Endothelial cell of umbilical vein (primary cell): ENCODE measurements at regions of chr11 and their contacts with region 1.

Region 1: DNA sequence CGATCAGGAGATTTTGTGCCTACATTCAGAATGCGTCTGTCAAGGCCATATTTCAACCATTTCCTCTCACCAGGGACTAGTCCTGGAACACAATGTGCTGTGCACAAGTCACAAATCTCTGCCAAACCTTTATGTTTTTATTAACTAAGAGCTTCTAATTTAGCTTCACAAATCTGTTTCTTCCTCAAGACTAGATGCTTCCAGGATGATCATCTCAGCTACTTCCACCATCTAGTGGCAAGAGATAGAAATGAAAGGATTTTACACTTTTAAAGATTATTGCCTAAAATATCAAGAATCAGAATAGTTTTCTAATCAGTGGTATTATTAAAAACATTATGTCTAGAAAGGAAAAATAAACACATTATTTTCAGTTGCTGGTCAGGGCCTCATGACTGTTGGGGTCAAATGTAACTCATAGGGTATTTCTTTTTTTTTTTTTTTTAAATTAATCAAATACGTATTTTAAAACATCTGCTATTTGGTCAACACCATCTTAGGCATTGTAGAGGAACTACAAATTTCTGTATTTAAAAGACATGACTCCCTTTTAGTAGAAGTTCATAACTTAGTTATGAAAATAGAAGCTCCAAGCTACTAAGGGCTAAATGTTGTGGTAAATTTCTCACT is 1102.6 kb downstream of the DLG2 start:
- DNase-seq: no peak
- H3K4me3 ChIP-seq: no peak overlapping the region
- H3K27ac ChIP-seq: no peak overlapping the region
- H3K4me1 ChIP-seq: no peaks in the 10 kb centered on the region
- H3K27me3 ChIP-seq: no peaks in the 10 kb centered on the region
- CTCF ChIP-seq: peak in 1 of 2 donors; percentile 6
- POLR2A ChIP-seq: no peak

Region 2: DNA sequence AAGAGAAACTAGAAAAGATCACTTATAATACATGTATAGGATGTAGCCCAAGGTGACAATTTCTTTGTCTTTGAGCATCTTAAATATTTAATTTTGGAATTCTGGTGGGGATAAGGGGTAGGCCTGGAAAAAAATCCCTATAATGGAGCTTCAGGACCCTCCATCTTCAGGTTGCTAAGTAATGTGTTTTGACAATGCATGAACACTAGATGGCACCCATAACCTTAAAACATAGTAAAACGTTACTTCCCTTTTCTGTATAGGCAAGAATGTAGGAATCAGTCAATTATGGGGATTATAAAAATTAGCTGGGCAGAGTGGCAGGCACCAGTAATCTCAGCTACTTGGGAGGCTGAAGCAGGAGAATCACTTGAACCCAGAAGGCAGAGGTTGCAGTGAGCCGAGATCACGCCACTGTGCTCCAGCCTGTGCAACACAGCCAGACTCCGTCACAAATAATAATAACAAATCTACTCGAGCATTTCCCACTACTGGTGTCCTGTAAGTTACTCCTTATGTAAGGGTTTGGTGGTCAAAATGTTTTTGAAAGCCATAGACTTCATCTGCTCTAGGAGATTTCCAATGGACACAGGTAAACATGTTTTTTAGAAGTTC is 696.5 kb before region 1 on chr11:
- CTCF ChIA-PET with region 1: no interaction called
- POLR2A ChIA-PET with region 1: no interaction called
- dilution Hi-C with region 1: no loop called
- intact Hi-C with region 1: loop called (anchors 5 kb)
- DNase-seq: peak; percentile 43
- H3K4me3 ChIP-seq: no peak overlapping the region
- H3K27ac ChIP-seq: no peak overlapping the region
- H3K4me1 ChIP-seq: no peaks in the 10 kb centered on the region
- H3K27me3 ChIP-seq: no peaks in the 10 kb centered on the region
- CTCF ChIP-seq: peak; percentile 31 to 42
- POLR2A ChIP-seq: no peak

Region 3: GRCh38 chr11:83836883-83837654 is 687.5 kb before region 1 on chr11:
- CTCF ChIA-PET with region 1: interaction called, 5 read pairs
- POLR2A ChIA-PET with region 1: no interaction called
- dilution Hi-C with region 1: no loop called
- intact Hi-C with region 1: loop called (anchors 2 kb)
- DNase-seq: peak; percentile 27
- H3K4me3 ChIP-seq: no peak overlapping the region
- H3K27ac ChIP-seq: no peak overlapping the region
- H3K4me1 ChIP-seq: no peaks in the 10 kb centered on the region
- H3K27me3 ChIP-seq: peaks cover 0 to 6% of the 10 kb centered on the region in 2 experiments
- CTCF ChIP-seq: peak; percentile 50 to 65
- POLR2A ChIP-seq: no peak

Region 4: GRCh38 chr11:84384731-84385130 is 139.8 kb before region 1 on chr11:
- CTCF ChIA-PET with region 1: no interaction called
- POLR2A ChIA-PET with region 1: no interaction called
- dilution Hi-C with region 1: no loop called
- intact Hi-C with region 1: loop called (anchors 1 kb)
- DNase-seq: peak; percentile 44
- H3K4me3 ChIP-seq: no peak overlapping the region
- H3K27ac ChIP-seq: no peak overlapping the region
- H3K4me1 ChIP-seq: no peaks in the 10 kb centered on the region
- H3K27me3 ChIP-seq: no peaks in the 10 kb centered on the region
- CTCF ChIP-seq: peak; percentile 61 to 70
- POLR2A ChIP-seq: no peak